Right ventricle myocardium inferior (tissue), 1 donor: ENCODE measurements at regions of chr10 and their contacts with region 1.

Region 1: GRCh38 chr10:73717556-73717955 is 19.6 kb upstream of the AGAP5 start:
- DNase-seq: no peak
- ATAC-seq: no peak

Region 2: DNA sequence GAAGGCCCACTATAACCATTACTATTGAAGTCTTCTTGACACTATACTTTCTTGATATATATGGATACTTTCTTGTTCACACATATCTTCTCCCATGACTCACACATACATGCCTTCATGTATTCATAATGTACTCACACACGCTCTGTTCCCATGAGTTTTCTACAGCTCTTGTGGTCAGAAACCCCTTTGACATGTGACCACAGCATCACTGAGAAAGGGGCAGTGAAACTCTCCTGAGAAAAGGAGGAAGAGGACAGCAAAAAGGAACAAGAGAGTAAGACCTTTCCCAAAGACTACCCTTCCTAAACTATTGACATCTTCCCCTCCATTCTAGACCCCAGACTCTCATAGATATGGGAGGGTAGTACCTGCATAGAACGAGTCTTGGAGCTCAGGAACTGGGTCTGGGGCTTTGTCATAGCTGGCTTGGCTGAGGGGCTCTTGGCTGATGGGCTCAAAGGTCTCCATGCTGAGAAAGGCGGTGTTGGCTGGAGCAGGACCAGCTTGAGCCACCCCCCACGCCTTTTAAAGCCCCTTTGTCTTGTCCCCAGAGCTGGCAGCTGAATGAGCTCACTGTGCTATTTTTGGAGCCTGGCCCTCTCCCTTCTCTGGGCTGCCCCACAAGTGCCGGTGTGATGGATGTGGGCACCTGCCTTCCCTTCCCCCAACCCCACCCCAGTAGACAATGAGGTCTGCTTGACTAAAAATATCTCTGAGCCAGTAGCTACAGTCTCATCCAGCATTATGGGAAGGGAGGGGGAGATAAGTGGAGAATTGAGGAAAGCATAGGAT is 66.8 kb before region 1 on chr10:
- intact Hi-C with region 1: loop called (anchors 5 kb)
- DNase-seq: no peak
- ATAC-seq: peak; percentile 56

Region 3: GRCh38 chr10:73798927-73799563 is 81.5 kb after region 1 on chr10:
- intact Hi-C with region 1: no loop called
- DNase-seq: no peak
- ATAC-seq: peak; percentile 14

Region 4: DNA sequence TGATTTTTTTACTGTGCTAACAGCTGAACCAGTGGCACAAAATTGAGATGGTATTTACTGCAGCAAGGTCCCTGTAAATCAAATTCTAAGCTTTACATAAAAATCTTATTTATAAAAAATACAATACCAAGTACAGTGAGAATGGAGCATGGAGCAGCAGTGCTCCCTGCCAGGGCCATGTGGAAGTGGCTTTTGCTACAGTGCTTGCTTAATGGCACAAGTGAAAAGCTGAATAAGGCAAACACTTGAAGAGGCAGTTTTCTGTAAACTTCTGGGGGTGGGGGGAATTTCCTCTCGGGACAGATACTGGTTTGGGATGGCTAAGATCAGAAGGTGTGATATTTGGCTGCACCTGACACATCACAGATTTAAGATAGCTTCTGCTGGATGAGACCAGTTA is 405.5 kb after region 1 on chr10:
- intact Hi-C with region 1: no loop called
- DNase-seq: no peak
- ATAC-seq: no peak